Activated CD4-positive, alpha-beta T cell treated with anti-CD3 and anti-CD28 coated beads, Interleukin-2, amount 10 ng/mL, durations not matched to agents 24 days and 14 days (primary cell): ENCODE measurements at regions of chr14 and their contacts with region 1.

Region 1: DNA sequence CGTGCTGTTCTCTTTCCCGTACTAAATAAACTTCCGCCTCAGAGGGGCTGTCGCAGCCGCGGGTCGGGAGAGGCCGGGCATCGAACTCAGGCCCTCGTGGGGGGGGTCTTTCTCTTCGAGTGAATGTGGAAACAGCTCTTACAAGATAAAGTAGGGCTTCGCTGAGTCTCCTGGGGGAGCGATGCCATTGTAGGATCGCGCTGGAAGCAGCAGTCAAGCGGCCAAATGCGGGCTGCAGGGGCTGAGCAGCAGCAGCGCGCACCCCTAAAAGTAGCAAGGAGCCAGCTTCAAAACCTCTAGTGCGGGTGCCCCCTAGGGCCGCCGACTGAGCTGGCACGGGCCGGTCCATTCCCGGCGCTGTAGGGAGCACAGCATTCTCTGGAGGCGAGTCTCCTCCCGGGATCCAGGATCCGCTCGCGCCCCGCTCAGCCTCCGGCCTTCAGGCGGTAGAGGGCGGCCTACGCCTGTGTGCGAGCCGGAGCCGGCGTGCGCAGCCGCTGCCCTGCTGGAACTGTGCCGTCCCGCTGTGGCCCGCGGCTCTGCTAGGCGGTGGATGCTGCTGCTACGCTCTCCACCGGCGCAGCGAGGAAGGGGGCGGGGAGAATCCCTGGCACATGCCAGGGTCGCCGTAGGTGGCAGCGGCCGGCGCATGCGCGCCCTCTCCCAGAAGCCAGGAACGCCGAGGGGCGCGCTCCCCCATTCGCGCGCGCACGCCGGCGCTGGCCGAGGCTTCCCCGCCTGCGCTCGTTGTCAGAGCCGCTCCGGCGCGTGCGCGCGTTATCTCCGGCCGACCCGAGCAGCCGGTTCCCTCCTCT is at the start of gene FUT8:
- DNase-seq: peak; percentile 97
- H3K4me3 Mint-ChIP-seq: peak within 1 kb of the TSS; percentile 99
- H3K27ac Mint-ChIP-seq: peak within 1 kb of the TSS; percentile 96
- H3K4me1 Mint-ChIP-seq: peaks cover 38% of the 10 kb centered on the region
- H3K27me3 Mint-ChIP-seq: no peaks in the 10 kb centered on the region
- total RNA-seq, gene FUT8: 125 and 137 TPM in 2 replicates

Region 2: GRCh38 chr14:65102441-65103149 is 309.6 kb before region 1 on chr14 and contains the start of gene MAX:
- intact Hi-C with region 1: loop called (anchors 2 kb)
- DNase-seq: peak; percentile 99
- H3K4me3 Mint-ChIP-seq: peak within 1 kb of the TSS; percentile 91
- H3K27ac Mint-ChIP-seq: peak within 1 kb of the TSS; percentile 94
- H3K4me1 Mint-ChIP-seq: peaks cover 36% of the 10 kb centered on the region
- H3K27me3 Mint-ChIP-seq: peaks cover 7% of the 10 kb centered on the region
- total RNA-seq, gene MAX: 122 and 128 TPM in 2 replicates

Region 3: DNA sequence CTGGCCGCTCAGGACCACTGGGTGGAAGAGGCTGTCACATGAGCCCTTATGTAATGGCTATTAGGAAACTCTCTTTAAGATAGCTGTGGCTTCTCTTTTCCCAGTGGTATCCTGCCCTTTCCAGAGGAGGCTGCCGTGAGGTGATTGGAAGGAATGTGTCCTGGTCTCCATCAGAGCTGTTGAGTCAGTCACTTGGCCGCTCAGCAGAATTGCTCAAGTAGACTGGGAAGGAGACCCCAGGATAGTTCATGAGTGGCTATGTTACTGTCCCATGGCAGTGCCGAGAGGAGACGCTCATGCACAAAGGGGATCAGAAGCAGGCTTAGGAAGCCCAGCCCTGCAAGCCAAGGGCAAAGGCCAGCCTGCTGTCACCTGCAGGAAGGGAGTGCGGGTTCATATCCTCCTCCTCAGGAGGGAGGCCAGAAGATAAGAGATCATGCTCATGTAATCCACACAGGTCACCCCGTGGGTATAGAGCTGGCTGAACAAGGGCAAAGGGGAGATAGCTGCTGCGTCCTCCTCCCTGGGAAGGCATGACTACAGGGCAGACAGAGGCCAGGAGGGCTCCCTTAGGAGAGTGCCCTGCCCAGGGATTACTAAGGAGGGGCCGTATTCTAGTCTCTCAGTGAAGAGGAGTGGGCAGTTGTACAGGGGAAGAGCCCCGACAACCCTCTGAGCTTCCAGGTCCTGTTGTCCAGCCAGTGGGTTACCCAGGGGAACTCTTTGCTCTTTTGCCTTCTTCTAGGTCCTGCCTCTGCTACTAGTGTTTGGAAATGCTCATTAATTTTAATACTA is 172.9 kb before region 1 on chr14:
- intact Hi-C with region 1: no loop called
- DNase-seq: no peak
- H3K4me3 Mint-ChIP-seq: no peak overlapping the region
- H3K27ac Mint-ChIP-seq: no peak overlapping the region
- H3K4me1 Mint-ChIP-seq: peaks cover 9% of the 10 kb centered on the region
- H3K27me3 Mint-ChIP-seq: no peaks in the 10 kb centered on the region

Region 4: GRCh38 chr14:65287264-65288131 is 124.7 kb before region 1 on chr14:
- intact Hi-C with region 1: loop called (anchors 1 kb)
- DNase-seq: peak; percentile 89
- H3K4me3 Mint-ChIP-seq: peak overlapping the region; percentile 78
- H3K27ac Mint-ChIP-seq: peak overlapping the region; percentile 98
- H3K4me1 Mint-ChIP-seq: peaks cover 66% of the 10 kb centered on the region
- H3K27me3 Mint-ChIP-seq: no peaks in the 10 kb centered on the region

Region 5: DNA sequence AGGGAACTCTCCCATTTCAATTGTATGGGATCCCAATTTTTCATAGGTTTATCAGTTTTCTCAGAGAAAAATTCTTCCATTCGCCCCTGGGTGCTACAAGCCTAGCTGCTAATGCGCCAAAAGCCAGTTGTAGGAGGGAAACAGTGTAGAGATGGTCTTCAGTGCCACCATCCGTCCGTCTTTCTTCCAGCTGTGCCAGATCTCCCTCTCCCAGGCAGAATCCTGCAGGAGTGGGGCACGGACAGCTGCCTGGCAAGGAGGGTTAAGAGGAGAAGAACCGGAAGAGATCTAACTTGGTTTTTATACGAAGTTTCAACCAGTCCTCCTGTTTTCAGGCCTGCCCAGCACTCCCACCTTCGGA is 38.6 kb before region 1 on chr14:
- intact Hi-C with region 1: loop called (anchors 5 kb)
- DNase-seq: no peak
- H3K4me3 Mint-ChIP-seq: no peak overlapping the region
- H3K27ac Mint-ChIP-seq: peak overlapping the region; percentile 70
- H3K4me1 Mint-ChIP-seq: peaks cover 43% of the 10 kb centered on the region
- H3K27me3 Mint-ChIP-seq: no peaks in the 10 kb centered on the region

Region 6: DNA sequence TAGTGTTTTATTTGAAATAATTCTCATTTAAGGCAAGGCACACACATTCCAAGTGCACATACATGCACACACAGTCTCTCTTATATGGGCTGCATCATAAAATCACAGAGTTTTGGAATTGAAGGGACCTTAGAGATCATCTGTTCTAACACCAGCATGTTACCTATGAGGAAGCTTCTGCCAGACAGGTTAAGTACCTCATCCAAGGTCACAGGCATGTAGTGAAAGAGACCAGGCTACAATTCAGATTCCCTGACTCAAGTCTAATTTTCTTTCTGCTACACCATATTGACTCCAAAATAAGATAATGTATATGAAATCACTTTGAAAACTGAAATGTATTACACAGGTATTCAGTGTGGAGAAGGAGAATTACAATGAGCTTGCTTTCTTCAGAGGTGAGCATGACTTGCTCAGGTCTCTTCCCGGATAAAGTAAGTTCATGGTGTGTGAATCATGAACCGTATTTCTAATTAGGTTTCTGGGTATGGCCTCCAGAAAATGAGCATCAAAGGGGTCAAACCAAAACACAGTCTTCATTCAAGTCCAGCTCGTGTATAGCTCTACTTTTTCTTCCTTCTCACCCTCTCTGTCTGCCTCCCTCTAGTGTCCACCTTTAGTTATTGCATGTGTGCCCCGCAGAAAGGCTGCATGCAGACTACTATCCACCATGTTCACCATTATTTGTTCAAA is 412.2 kb after region 1 on chr14:
- intact Hi-C with region 1: loop called (anchors 1 kb)
- DNase-seq: peak; percentile 91
- H3K4me3 Mint-ChIP-seq: no peak overlapping the region
- H3K27ac Mint-ChIP-seq: no peak overlapping the region
- H3K4me1 Mint-ChIP-seq: peaks cover 17% of the 10 kb centered on the region
- H3K27me3 Mint-ChIP-seq: peaks cover 9% of the 10 kb centered on the region

Region 7: DNA sequence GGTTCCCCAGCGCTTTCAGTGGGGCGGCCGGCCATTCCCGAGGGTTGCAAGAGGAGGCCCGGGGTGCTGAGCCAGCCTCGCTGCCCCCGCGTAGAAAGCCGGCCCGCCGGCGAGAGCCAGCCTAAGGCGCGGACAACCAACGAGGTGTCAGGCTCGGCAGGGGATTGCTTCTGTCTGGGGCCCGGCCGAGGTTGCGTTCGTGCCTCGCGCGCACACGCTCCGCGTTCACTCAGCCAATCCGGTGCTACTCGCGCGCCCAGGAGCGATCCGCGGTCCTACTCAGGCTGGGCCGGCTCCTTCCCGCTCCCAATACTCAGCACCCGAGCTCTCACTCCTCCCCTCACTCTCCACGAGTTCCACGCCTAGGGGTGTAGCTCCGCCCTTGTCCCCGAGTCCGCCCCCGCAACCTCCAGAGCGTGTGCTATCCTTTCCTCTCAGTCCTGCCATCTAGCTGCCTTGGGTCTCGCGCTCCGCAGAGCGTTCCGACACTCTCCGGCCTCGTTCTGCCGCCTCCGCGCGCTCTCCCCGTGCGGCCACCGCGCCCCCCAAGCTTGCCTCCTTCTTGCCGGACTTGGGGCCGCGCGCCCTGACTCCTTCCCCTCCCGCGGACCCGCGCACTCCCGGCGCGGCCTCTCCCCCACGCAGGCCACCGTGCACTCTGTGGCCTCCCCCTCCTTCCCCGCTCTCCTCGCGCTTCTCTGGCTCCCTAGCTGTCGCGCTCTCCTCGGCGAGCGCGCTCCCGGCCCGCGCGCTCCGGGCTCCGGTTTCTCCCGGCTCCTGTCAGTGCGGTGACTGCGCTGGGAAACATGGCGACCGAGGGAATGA is 1095.7 kb after region 1 on chr14 and contains the start of gene GPHN:
- intact Hi-C with region 1: loop called (anchors 5 kb)
- DNase-seq: peak; percentile 97
- H3K4me3 Mint-ChIP-seq: peak within 1 kb of the TSS; percentile 89
- H3K27ac Mint-ChIP-seq: peak within 1 kb of the TSS; percentile 96
- H3K4me1 Mint-ChIP-seq: peaks cover 24% of the 10 kb centered on the region
- H3K27me3 Mint-ChIP-seq: peaks cover 20% of the 10 kb centered on the region
- total RNA-seq, gene GPHN: 44.4 and 46.8 TPM in 2 replicates